WTC11 (cell line): ENCODE measurements at regions of chr6 and their contacts with region 1.

Region 1: GRCh38 chr6:42136508-42137193 is 5.8 kb downstream of the C6orf132 start:
- DNase-seq: peak; percentile 87
- ATAC-seq: peak; percentile 81
- H3K4me3 Mint-ChIP-seq: peak overlapping the region; percentile 61
- H3K27ac Mint-ChIP-seq: peak overlapping the region; percentile 100
- H3K4me1 Mint-ChIP-seq: peaks cover 79% of the 10 kb centered on the region
- H3K27me3 Mint-ChIP-seq: no peaks in the 10 kb centered on the region; the same call in 1 of the 2 replicates
- CTCF ChIP-seq: no peak; the same call in 1 of the 2 replicates

Region 2: GRCh38 chr6:42166444-42167141 is 29.9 kb after region 1 on chr6:
- CTCF ChIA-PET with region 1: interaction called, 46 read pairs
- POLR2A ChIA-PET with region 1: interaction called, 8 read pairs
- DNase-seq: peak; percentile 96
- ATAC-seq: peak; percentile 91
- H3K4me3 Mint-ChIP-seq: no peak overlapping the region
- H3K27ac Mint-ChIP-seq: peak overlapping the region; percentile 81
- H3K4me1 Mint-ChIP-seq: peaks cover 45% of the 10 kb centered on the region
- H3K27me3 Mint-ChIP-seq: peaks cover 11% of the 10 kb centered on the region
- CTCF ChIP-seq: peak; percentile 96

Region 3: GRCh38 chr6:42175860-42176259 is 39.2 kb after region 1 on chr6:
- CTCF ChIA-PET with region 1: interaction called, 12 read pairs
- POLR2A ChIA-PET with region 1: no interaction called
- DNase-seq: peak; percentile 42
- ATAC-seq: peak; percentile 6; the same call in 1 of the 2 replicates
- H3K4me3 Mint-ChIP-seq: no peak overlapping the region
- H3K27ac Mint-ChIP-seq: peak overlapping the region; percentile 8; the same call in 1 of the 2 replicates
- H3K4me1 Mint-ChIP-seq: peaks cover 44% of the 10 kb centered on the region
- H3K27me3 Mint-ChIP-seq: peaks cover 5% of the 10 kb centered on the region
- CTCF ChIP-seq: 0 out of 2 replicates have a peak, but pooled peaks have one; percentile 16

Region 4: GRCh38 chr6:42190554-42191183 is 54.0 kb after region 1 on chr6:
- CTCF ChIA-PET with region 1: no interaction called
- POLR2A ChIA-PET with region 1: no interaction called
- DNase-seq: no peak
- ATAC-seq: no peak
- H3K4me3 Mint-ChIP-seq: no peak overlapping the region
- H3K27ac Mint-ChIP-seq: 0 out of 2 replicates have a peak overlapping the region, but pooled peaks have one; percentile 7
- H3K4me1 Mint-ChIP-seq: peaks cover 24% of the 10 kb centered on the region
- H3K27me3 Mint-ChIP-seq: peaks cover 7% of the 10 kb centered on the region
- CTCF ChIP-seq: no peak